Sigmoid colon (tissue), 7 donors: ENCODE measurements at regions of chr5 and their contacts with region 1.

Region 1: DNA sequence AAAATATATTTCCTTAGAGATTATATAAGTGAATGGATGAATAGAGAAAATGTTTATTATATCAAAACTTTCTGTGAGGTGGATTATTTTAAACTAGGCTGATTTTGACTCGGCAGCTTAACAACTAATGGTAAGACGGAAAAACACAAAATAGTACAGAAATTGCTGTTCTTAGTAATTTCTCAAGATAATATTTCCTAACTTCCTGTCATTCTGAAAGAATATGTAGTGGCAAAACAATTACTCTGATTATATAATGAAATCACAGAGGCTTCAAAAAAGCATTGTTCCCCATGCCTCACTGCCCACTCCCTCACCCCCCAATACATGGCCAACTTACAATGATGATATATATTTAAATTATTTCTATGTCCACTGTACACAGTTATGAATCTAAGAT is 85.4 kb downstream of the YTHDC2 start:
- DNase-seq: no peak
- H3K4me3 ChIP-seq: no peak overlapping the region
- H3K27ac ChIP-seq: no peak overlapping the region
- H3K4me1 ChIP-seq: no peaks in the 10 kb centered on the region
- H3K27me3 ChIP-seq: no peaks in the 10 kb centered on the region
- CTCF ChIP-seq: no peak
- EP300 ChIP-seq: no peak
- POLR2A ChIP-seq: no peak

Region 2: GRCh38 chr5:111762895-111763294 is 1836.0 kb before region 1 on chr5:
- intact Hi-C with region 1: loop called (anchors 10 kb)
- DNase-seq: no peak
- H3K4me3 ChIP-seq: no peak overlapping the region
- H3K27ac ChIP-seq: no peak overlapping the region
- H3K4me1 ChIP-seq: peaks cover 0 to 11% (median 8%) of the 10 kb centered on the region in 4 donors
- H3K27me3 ChIP-seq: no peaks in the 10 kb centered on the region
- CTCF ChIP-seq: no peak
- EP300 ChIP-seq: no peak
- POLR2A ChIP-seq: no peak

Region 3: DNA sequence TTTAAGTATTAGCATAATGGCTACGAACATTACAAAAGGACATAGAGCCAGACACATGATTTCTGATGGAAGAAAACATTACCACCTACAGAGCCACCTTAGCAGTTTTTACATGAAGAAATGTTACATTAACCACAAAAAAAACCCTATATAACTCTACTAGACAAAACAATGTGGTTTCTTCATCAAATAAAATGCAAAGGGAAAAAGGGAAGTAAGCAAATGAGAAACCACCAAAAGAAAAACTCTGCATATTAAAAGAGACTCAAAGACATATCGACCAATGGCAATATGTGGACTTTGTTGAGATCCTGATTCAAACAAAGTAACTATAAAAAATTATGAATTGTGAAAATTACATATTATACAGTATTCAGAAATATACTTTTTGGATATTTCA is 296.8 kb before region 1 on chr5:
- intact Hi-C with region 1: no loop called
- DNase-seq: no peak
- H3K4me3 ChIP-seq: no peak overlapping the region
- H3K27ac ChIP-seq: no peak overlapping the region
- H3K4me1 ChIP-seq: no peaks in the 10 kb centered on the region
- H3K27me3 ChIP-seq: no peaks in the 10 kb centered on the region
- CTCF ChIP-seq: no peak
- EP300 ChIP-seq: no peak
- POLR2A ChIP-seq: no peak